Naive thymus-derived CD4-positive, alpha-beta T cell (primary cell): ENCODE measurements at regions of chr20 and their contacts with region 1.

Region 1: GRCh38 chr20:35741892-35742740 is at the start of gene RBM39:
- DNase-seq: peak; percentile 92 to 100 (median 99)
- ATAC-seq: peak; percentile 92
- H3K4me3 ChIP-seq: peak within 1 kb of the TSS; percentile 98
- H3K4me3 Mint-ChIP-seq: peak within 1 kb of the TSS; percentile 86 to 100 (median 98)
- H3K27ac ChIP-seq: peak within 1 kb of the TSS; percentile 98
- H3K27ac Mint-ChIP-seq: peak within 1 kb of the TSS; percentile 96 to 100 (median 100)
- H3K4me1 ChIP-seq: peaks cover 34 to 49% of the 10 kb centered on the region in 2 donors
- H3K4me1 Mint-ChIP-seq: peaks cover 22 to 53% (median 45%) of the 10 kb centered on the region in 7 donors
- H3K27me3 ChIP-seq: no peaks in the 10 kb centered on the region
- H3K27me3 Mint-ChIP-seq: no peaks in the 10 kb centered on the region
- total RNA-seq, gene RBM39: 372 to 1,041 (median 699) TPM

Region 2: DNA sequence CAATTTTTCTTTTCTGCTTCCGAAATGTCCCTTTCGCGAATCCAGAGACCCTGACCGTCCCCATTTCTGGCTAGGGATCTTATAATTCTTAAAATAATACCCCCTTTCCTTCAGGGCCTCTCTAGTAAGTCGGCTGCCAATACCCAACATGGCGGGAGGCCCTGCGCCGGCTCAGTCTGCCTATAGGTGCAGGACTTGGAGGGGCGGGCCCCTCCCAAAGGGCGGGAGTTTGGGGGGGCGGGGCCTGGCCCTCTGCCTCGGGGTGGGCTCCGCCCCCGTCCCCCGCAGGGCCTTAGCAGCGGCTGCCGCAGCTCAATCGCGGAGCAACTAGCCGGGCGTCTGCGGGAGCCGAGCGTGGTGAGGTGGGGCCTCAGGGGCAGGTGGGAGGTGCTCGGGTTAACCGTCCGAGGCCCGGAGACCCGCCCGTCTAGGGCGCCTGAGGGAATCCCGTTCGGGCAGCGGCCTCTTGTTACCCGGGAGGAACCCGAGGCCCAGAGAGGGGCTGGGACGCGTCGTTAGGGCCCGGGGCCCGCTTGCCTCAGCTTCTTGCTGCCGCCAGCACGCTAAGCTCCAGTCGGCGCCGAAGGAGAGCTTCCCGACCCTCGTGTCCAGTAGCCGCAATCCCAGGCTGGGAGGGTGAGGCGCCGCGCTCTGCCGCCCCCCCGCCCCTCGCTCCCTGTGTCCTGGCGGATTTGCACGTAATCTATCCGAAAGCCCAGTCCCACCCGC is 287.1 kb before region 1 on chr20 and contains the start of gene CEP250:
- CTCF ChIA-PET with region 1: interaction called, 4 read pairs
- POLR2A ChIA-PET with region 1: interaction called, 18 read pairs
- intact Hi-C with region 1: loop called in 1 of 2 experiments (anchors 1 kb)
- DNase-seq: peak; percentile 89 to 97 (median 96)
- ATAC-seq: peak; percentile 99
- H3K4me3 ChIP-seq: peak within 1 kb of the TSS; percentile 94
- H3K4me3 Mint-ChIP-seq: peak within 1 kb of the TSS; percentile 82 to 98 (median 93)
- H3K27ac ChIP-seq: peak within 1 kb of the TSS; percentile 94
- H3K27ac Mint-ChIP-seq: peak within 1 kb of the TSS; percentile 86 to 99 (median 98)
- H3K4me1 ChIP-seq: no peaks in the 10 kb centered on the region
- H3K4me1 Mint-ChIP-seq: peaks cover 0 to 38% (median 23%) of the 10 kb centered on the region in 7 donors
- H3K27me3 ChIP-seq: no peaks in the 10 kb centered on the region
- H3K27me3 Mint-ChIP-seq: no peaks in the 10 kb centered on the region
- total RNA-seq, gene CEP250: 34.5 to 75.0 (median 70.7) TPM

Region 3: GRCh38 chr20:35601008-35601973 is 140.8 kb before region 1 on chr20:
- CTCF ChIA-PET with region 1: no interaction called
- POLR2A ChIA-PET with region 1: interaction called, 4 read pairs
- intact Hi-C with region 1: loop called in 1 of 2 experiments (anchors 1 kb)
- DNase-seq: peak; percentile 66 to 82 (median 77)
- ATAC-seq: peak; percentile 95
- H3K4me3 ChIP-seq: peak overlapping the region; percentile 72
- H3K4me3 Mint-ChIP-seq: peak overlapping the region; percentile 72 to 84 (median 80)
- H3K27ac ChIP-seq: peak overlapping the region; percentile 36
- H3K27ac Mint-ChIP-seq: peak overlapping the region in 1 of 9 donors; percentile 10
- H3K4me1 ChIP-seq: peaks cover 5 to 6% of the 10 kb centered on the region in 2 donors
- H3K4me1 Mint-ChIP-seq: peaks cover 0 to 11% (median 6%) of the 10 kb centered on the region in 7 donors
- H3K27me3 ChIP-seq: peaks cover 0 to 5% of the 10 kb centered on the region in 2 donors
- H3K27me3 Mint-ChIP-seq: peaks cover 0 to 65% (median 5%) of the 10 kb centered on the region in 5 donors

Region 4: GRCh38 chr20:35699127-35699975 is 42.8 kb before region 1 on chr20 and contains the starts of genes NFS1 and ROMO1:
- CTCF ChIA-PET with region 1: interaction called, 3 read pairs
- POLR2A ChIA-PET with region 1: interaction called, 85 read pairs
- intact Hi-C with region 1: loop called (anchors 1 kb)
- DNase-seq: peak; percentile 71 to 87 (median 82)
- ATAC-seq: peak; percentile 92
- H3K4me3 ChIP-seq: peak within 1 kb of the TSS; percentile 89
- H3K4me3 Mint-ChIP-seq: peak within 1 kb of the TSS; percentile 90 to 99 (median 98)
- H3K27ac ChIP-seq: peak within 1 kb of the TSS; percentile 87
- H3K27ac Mint-ChIP-seq: peak within 1 kb of the TSS; percentile 95 to 99 (median 97)
- H3K4me1 ChIP-seq: peaks cover 13 to 16% of the 10 kb centered on the region in 2 donors
- H3K4me1 Mint-ChIP-seq: peaks cover 15 to 66% (median 52%) of the 10 kb centered on the region in 7 donors
- H3K27me3 ChIP-seq: no peaks in the 10 kb centered on the region
- H3K27me3 Mint-ChIP-seq: no peaks in the 10 kb centered on the region
- total RNA-seq, gene NFS1: 18.2 to 41.1 (median 35.0) TPM
- total RNA-seq, gene ROMO1: 33.2 to 85.5 (median 38.5) TPM

Region 5: GRCh38 chr20:35726759-35727711 is 15.1 kb before region 1 on chr20:
- CTCF ChIA-PET with region 1: interaction called, 6 read pairs
- POLR2A ChIA-PET with region 1: interaction called, 35 read pairs
- intact Hi-C with region 1: no loop called
- DNase-seq: no peak
- ATAC-seq: no peak
- H3K4me3 ChIP-seq: no peak overlapping the region
- H3K4me3 Mint-ChIP-seq: peak overlapping the region in 1 of 10 donors; percentile 8
- H3K27ac ChIP-seq: no peak overlapping the region
- H3K27ac Mint-ChIP-seq: peak overlapping the region in 2 of 9 donors; percentile 26 to 43
- H3K4me1 ChIP-seq: peaks cover 19 to 35% of the 10 kb centered on the region in 2 donors
- H3K4me1 Mint-ChIP-seq: peaks cover 15 to 67% (median 46%) of the 10 kb centered on the region in 7 donors
- H3K27me3 ChIP-seq: no peaks in the 10 kb centered on the region
- H3K27me3 Mint-ChIP-seq: no peaks in the 10 kb centered on the region

Region 6: DNA sequence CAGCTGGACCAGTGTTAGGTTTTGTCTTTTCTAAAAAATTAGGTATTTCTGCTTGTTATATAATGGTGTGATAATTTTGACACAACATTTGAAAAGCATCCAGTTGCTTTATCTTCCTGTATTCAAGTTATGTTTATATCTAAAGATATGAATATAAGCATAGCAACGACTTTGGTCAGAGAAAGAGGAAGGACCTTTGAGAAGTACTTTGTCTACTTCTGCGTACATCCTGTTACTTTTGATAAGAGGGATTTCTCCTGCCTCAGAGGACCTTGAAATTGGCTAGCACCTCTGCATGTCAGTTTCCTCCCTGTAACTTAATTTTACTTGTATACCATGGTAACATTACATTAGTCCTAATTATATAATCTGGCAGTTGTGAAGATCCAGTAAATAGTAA is 54.5 kb after region 1 on chr20:
- CTCF ChIA-PET with region 1: no interaction called
- POLR2A ChIA-PET with region 1: interaction called, 41 read pairs
- intact Hi-C with region 1: no loop called
- DNase-seq: peak in 6 of 9 donors; percentile 18 to 69 (median 65)
- ATAC-seq: peak; percentile 90
- H3K4me3 ChIP-seq: no peak overlapping the region
- H3K4me3 Mint-ChIP-seq: peak overlapping the region in 8 of 10 donors; percentile 23 to 68 (median 52)
- H3K27ac ChIP-seq: peak overlapping the region; percentile 82
- H3K27ac Mint-ChIP-seq: peak overlapping the region; percentile 13 to 99 (median 94)
- H3K4me1 ChIP-seq: peaks cover 7 to 29% of the 10 kb centered on the region in 2 donors
- H3K4me1 Mint-ChIP-seq: peaks cover 8 to 61% (median 52%) of the 10 kb centered on the region in 7 donors
- H3K27me3 ChIP-seq: no peaks in the 10 kb centered on the region
- H3K27me3 Mint-ChIP-seq: no peaks in the 10 kb centered on the region

Region 7: DNA sequence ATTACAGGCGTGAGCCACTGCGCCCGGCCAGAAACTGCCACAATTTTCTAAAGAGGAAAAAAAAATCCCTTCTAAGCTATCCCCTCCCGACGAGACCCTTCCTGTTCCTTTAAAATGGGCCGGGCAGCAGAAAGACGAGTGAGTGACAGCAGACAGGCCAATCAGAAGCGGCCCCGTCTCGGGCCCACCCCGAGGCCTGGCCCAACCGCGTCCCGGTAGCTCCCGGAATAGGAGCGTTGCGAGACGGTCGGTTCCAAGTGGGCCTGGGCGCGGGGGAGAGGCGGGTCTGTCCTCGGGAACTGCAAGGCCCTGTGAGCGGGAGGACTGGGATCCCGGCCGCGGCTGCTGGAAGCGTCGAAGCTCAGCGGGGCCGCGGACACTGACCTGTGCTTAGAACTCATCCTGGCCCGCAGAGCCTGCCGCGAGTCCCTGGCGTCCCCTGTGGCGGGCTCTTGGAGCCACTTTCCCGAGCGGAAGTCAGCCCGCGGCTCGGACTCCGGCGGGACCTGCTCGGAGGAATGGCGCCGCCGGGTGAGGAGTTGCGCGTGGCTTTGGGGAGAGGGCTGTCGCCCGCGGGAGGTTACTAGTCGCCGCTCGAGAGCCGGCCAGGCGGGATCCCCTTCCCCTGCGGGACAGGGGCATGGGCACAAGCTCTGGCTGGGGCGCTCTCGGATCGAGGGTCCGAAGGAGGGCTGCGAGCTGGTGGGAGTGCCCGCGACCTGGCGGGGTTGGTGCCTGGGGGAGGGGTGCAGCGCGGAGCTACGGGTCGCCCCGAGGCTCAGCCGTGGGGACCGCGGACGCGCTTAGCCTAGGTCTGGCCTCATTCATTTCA is 1436.9 kb after region 1 on chr20 and contains the starts of genes MROH8 and RPN2:
- CTCF ChIA-PET with region 1: no interaction called
- POLR2A ChIA-PET with region 1: no interaction called
- intact Hi-C with region 1: loop called in 1 of 2 experiments (anchors 5 kb)
- DNase-seq: peak; percentile 83 to 95 (median 92)
- ATAC-seq: peak; percentile 96
- H3K4me3 ChIP-seq: peak within 1 kb of the TSS; percentile 85
- H3K4me3 Mint-ChIP-seq: peak within 1 kb of the TSS; percentile 89 to 99 (median 96)
- H3K27ac ChIP-seq: peak within 1 kb of the TSS; percentile 87
- H3K27ac Mint-ChIP-seq: peak within 1 kb of the TSS; percentile 94 to 99 (median 97)
- H3K4me1 ChIP-seq: peaks cover 13 to 15% of the 10 kb centered on the region in 2 donors
- H3K4me1 Mint-ChIP-seq: peaks cover 34 to 48% (median 36%) of the 10 kb centered on the region in 7 donors
- H3K27me3 ChIP-seq: no peaks in the 10 kb centered on the region
- H3K27me3 Mint-ChIP-seq: peaks cover 0 to 6% (median 0%) of the 10 kb centered on the region in 5 donors
- total RNA-seq, gene MROH8: 1.2 to 1.9 (median 1.6) TPM
- total RNA-seq, gene RPN2: 88.7 to 222 (median 108) TPM